Left cardiac atrium (tissue), 4 donors: ENCODE measurements at regions of chr3 and their contacts with region 1.

Region 1: DNA sequence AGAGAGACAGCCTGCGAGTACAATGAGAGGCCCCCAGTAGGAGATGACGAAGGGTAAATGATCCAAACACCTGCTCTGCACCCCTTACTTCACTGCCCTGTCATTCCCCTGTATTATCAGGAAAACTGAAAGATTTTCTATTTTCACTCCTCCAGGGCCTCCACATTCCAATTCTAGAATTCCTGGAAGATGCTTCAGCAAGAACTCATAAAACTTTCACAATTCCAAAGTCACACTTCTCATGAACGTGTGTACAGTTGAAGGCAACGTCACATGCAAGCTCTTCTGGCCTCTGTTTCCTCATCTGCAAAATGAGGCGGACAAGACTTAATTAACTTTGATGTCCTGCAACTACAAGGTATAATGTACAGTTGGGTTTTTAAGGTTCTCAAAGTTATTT is 62.8 kb upstream of the SPATA12 start:
- DNase-seq: no peak
- ATAC-seq: peak; percentile 35 to 39

Region 2: GRCh38 chr3:57078344-57078634 is 80.6 kb after region 1 on chr3:
- intact Hi-C with region 1: loop called in 1 of 2 experiments (anchors 10 kb)
- DNase-seq: peak; percentile 56
- ATAC-seq: peak; percentile 58 to 70

Region 3: DNA sequence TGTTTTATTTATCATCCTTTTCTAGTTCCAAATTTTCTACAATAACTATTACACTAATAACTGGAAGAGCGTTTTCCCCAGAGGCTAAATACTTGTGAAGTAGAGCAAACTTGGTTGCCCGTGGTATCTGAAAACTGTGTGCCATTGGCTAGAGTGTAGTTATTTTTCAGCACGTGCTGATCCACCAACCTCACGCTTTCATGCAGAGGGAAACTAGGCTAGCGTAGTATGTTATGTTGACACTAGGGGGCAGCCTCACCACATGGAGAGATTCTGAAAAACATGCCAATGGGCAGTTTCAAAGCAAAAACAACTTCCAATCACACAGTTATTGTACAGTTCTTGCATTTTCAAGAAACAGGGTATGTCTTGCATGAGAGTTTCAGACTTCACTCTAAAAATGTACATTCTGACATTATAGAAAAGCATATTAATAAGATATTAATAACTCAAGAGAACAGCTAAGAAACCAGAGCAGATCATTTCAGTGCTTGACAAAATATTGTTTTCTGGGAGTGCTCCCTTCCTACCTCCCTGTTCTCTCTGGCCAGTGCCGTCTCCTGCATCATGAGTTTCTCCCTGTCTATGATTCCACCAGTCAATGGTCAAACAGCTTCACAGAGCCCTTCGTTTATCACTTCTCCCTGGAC is 102.5 kb after region 1 on chr3:
- intact Hi-C with region 1: no loop called
- DNase-seq: peak; percentile 52
- ATAC-seq: peak; percentile 81 to 88

Region 4: GRCh38 chr3:57227204-57227929 is 229.7 kb after region 1 on chr3 and contains the start of gene APPL1:
- intact Hi-C with region 1: loop called in 1 of 2 experiments (anchors 10 kb)
- DNase-seq: peak; percentile 94
- ATAC-seq: peak; percentile 98 to 99
- total RNA-seq, gene APPL1: 33.5 to 38.1 TPM